ENCODE measurements at regions of chr14 and their contacts with region 1.

Region 1: GRCh38 chr14:60965402-60965801 is 15.5 kb downstream of the TRMT5 start:
- DNase-seq: no peak
- H3K4me3 Mint-ChIP-seq: no peak overlapping the region
- H3K27ac Mint-ChIP-seq: peak overlapping the region; percentile 39
- H3K4me1 Mint-ChIP-seq: peaks cover 8% of the 10 kb centered on the region
- H3K27me3 Mint-ChIP-seq: no peaks in the 10 kb centered on the region

Region 2: DNA sequence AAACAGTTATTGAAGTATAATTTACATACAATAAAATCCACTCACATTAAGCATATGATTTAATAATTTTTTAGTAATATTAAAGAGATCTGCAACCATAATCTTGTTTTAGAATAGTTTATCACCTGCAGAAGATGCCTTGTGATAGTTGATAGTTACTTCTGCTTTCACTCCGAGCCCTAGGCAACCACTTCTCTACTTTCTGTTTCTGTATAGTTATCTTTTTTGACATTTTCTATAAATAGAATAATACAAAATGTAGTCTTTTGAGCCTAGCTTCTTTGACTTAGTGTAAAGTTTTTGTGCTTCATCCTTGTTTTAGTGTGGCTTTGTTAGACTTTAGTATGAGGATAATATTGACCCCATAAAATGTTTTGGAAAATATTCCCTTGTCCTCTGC is 119.9 kb before region 1 on chr14:
- CTCF ChIA-PET with region 1: no interaction called
- POLR2A ChIA-PET with region 1: no interaction called
- intact Hi-C with region 1: no loop called
- DNase-seq: no peak
- H3K4me3 Mint-ChIP-seq: no peak overlapping the region
- H3K27ac Mint-ChIP-seq: no peak overlapping the region
- H3K4me1 Mint-ChIP-seq: no peaks in the 10 kb centered on the region
- H3K27me3 Mint-ChIP-seq: no peaks in the 10 kb centered on the region

Region 3: GRCh38 chr14:60859525-60859924 is 105.9 kb before region 1 on chr14:
- CTCF ChIA-PET with region 1: no interaction called
- POLR2A ChIA-PET with region 1: no interaction called
- intact Hi-C with region 1: loop called (anchors 2 kb)
- DNase-seq: no peak
- H3K4me3 Mint-ChIP-seq: no peak overlapping the region
- H3K27ac Mint-ChIP-seq: no peak overlapping the region
- H3K4me1 Mint-ChIP-seq: peaks cover 22% of the 10 kb centered on the region
- H3K27me3 Mint-ChIP-seq: no peaks in the 10 kb centered on the region

Region 4: DNA sequence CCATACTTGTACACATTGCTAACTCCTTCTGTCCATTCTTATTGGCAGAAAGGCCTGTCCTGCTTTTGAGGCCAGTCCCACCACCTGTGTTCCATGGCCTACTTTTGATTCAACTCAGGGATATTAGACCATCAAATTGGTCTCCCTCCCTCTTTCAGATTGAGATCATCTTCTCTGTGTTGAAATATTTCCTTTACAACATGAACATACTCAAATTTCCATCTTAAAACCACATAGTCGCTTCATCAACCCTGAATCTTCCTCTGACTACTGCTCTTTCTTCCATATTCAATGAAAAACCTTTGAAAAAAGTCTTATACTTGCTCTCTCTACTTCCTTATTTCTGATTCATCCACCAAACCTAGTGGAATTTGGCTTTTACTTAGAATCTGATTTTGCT is 19.4 kb before region 1 on chr14:
- CTCF ChIA-PET with region 1: no interaction called
- POLR2A ChIA-PET with region 1: no interaction called
- intact Hi-C with region 1: loop called (anchors 1 kb)
- DNase-seq: no peak
- H3K4me3 Mint-ChIP-seq: no peak overlapping the region
- H3K27ac Mint-ChIP-seq: peak overlapping the region; percentile 30
- H3K4me1 Mint-ChIP-seq: peaks cover 13% of the 10 kb centered on the region
- H3K27me3 Mint-ChIP-seq: no peaks in the 10 kb centered on the region

Region 5: GRCh38 chr14:60980811-60981632 is 15.6 kb after region 1 on chr14 and contains the starts of genes SLC38A6 and TRMT5:
- CTCF ChIA-PET with region 1: no interaction called
- POLR2A ChIA-PET with region 1: interaction called, 7 read pairs
- intact Hi-C with region 1: loop called (anchors 2 kb)
- DNase-seq: peak; percentile 95
- H3K4me3 Mint-ChIP-seq: no peak within 1 kb of the TSS
- H3K27ac Mint-ChIP-seq: no peak within 1 kb of the TSS
- H3K4me1 Mint-ChIP-seq: peaks cover 21% of the 10 kb centered on the region
- H3K27me3 Mint-ChIP-seq: no peaks in the 10 kb centered on the region
- total RNA-seq, gene SLC38A6: 5.4 to 5.6 TPM
- total RNA-seq, gene TRMT5: 18.2 to 18.3 TPM